ENCODE measurements at regions of chr4 and their contacts with region 1.

Region 1: GRCh38 chr4:42282081-42282901 is 115.0 kb upstream of the SHISA3 start:
- DNase-seq: peak; percentile 81
- H3K4me3 ChIP-seq: peak overlapping the region in 1 of 2 experiments; percentile 12; a peak in 1 of 4 replicates
- H3K27ac ChIP-seq: peak overlapping the region in 1 of 2 experiments; percentile 36; a peak in 1 of 4 replicates
- H3K4me1 ChIP-seq: peaks cover 0 to 13% of the 10 kb centered on the region in 2 experiments; a peak in 3 of 4 replicates
- H3K27me3 ChIP-seq: no peaks in the 10 kb centered on the region
- CTCF ChIP-seq: peak; percentile 80
- EP300 ChIP-seq: no peak
- RAD21 ChIP-seq: peak; percentile 96

Region 2: GRCh38 chr4:42302348-42302747 is 20.1 kb after region 1 on chr4:
- CTCF ChIA-PET with region 1: interaction called, 41 read pairs
- POLR2A ChIA-PET with region 1: no interaction called
- DNase-seq: peak; percentile 64
- H3K4me3 ChIP-seq: no peak overlapping the region
- H3K27ac ChIP-seq: peak overlapping the region in 1 of 2 experiments; percentile 64; a peak in 2 of 4 replicates
- H3K4me1 ChIP-seq: peaks cover 0 to 30% of the 10 kb centered on the region in 2 experiments; a peak in 2 of 4 replicates
- H3K27me3 ChIP-seq: no peaks in the 10 kb centered on the region; the same call in 1 of the 2 replicates
- CTCF ChIP-seq: peak; percentile 45
- EP300 ChIP-seq: peak in 1 of 2 experiments; percentile 9; a peak in 1 of 4 replicates
- RAD21 ChIP-seq: peak; percentile 66

Region 3: GRCh38 chr4:42446823-42447222 is 164.5 kb after region 1 on chr4:
- CTCF ChIA-PET with region 1: no interaction called
- POLR2A ChIA-PET with region 1: no interaction called
- DNase-seq: no peak
- H3K4me3 ChIP-seq: no peak overlapping the region
- H3K27ac ChIP-seq: no peak overlapping the region
- H3K4me1 ChIP-seq: peaks cover 0 to 13% of the 10 kb centered on the region in 2 experiments; a peak in 2 of 4 replicates
- H3K27me3 ChIP-seq: no peaks in the 10 kb centered on the region
- CTCF ChIP-seq: no peak
- EP300 ChIP-seq: no peak
- RAD21 ChIP-seq: no peak

Measured in SK-N-SH (cell line).